Endothelial cell of umbilical vein (primary cell): ENCODE measurements at regions of chr14 and their contacts with region 1.

Region 1: GRCh38 chr14:75982266-75983018 is 647 bp upstream of the TGFB3 start:
- DNase-seq: peak; percentile 78
- H3K4me3 ChIP-seq: peak overlapping the region; percentile 66 to 73 (median 68)
- H3K27ac ChIP-seq: peak overlapping the region; percentile 62
- H3K4me1 ChIP-seq: peaks cover 28% of the 10 kb centered on the region
- H3K27me3 ChIP-seq: no peaks in the 10 kb centered on the region
- CTCF ChIP-seq: peak; percentile 32 to 74
- POLR2A ChIP-seq: no peak

Region 2: GRCh38 chr14:75660630-75661494 is 321.6 kb before region 1 on chr14 and contains the starts of genes ERG28 and TTLL5:
- CTCF ChIA-PET with region 1: interaction called, 7 read pairs
- POLR2A ChIA-PET with region 1: no interaction called
- dilution Hi-C with region 1: no loop called
- intact Hi-C with region 1: loop called (anchors 2 kb)
- DNase-seq: peak; percentile 98
- H3K4me3 ChIP-seq: peak within 1 kb of the TSS; percentile 84 to 99 (median 97)
- H3K27ac ChIP-seq: peak within 1 kb of the TSS; percentile 71
- H3K4me1 ChIP-seq: peaks cover 36% of the 10 kb centered on the region
- H3K27me3 ChIP-seq: no peaks in the 10 kb centered on the region
- CTCF ChIP-seq: no peak
- POLR2A ChIP-seq: no peak
- total RNA-seq, gene ERG28: 31.4 and 31.9 TPM in 2 replicates
- total RNA-seq, gene TTLL5: 70.0 and 93.6 TPM in 2 replicates

Region 3: GRCh38 chr14:75794615-75795038 is 187.8 kb before region 1 on chr14:
- CTCF ChIA-PET with region 1: interaction called, 195 read pairs
- POLR2A ChIA-PET with region 1: interaction called, 4 read pairs
- dilution Hi-C with region 1: no loop called
- intact Hi-C with region 1: loop called (anchors 1 kb)
- DNase-seq: peak; percentile 49
- H3K4me3 ChIP-seq: no peak overlapping the region
- H3K27ac ChIP-seq: no peak overlapping the region
- H3K4me1 ChIP-seq: no peaks in the 10 kb centered on the region
- H3K27me3 ChIP-seq: no peaks in the 10 kb centered on the region
- CTCF ChIP-seq: peak in 1 of 2 donors; percentile 31
- POLR2A ChIP-seq: no peak

Region 4: DNA sequence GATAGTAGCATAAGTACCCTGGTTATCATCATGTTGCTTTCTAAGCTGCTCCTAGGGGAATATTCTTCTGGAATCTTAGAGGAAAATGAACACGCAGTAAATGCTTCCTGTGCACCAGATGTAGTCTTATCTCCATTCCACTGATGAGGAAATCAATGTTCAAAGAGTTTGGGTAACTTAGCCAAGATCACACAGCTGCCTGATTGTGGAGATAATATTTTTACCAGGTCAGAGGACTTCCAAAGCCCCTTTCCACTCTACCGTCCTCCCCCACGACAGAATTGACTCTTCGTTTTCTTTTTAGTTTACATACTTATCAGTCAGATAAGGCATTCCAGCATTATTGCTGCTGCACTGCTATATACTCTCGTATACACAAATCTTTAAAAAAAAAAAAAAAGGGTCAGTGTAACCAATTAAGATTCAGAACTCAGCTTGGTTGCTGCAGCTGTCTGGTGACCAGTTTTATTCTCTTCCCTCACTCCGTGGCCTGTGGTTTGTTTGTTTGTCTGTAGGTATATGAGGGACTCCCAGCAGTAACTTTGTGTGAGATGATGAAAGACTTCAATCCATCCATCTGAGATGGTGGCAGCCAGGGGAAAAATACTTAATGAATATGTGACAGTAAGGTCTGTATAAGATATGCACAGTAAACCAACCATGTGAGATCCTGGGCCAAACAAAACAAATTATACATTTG is 111.1 kb before region 1 on chr14:
- CTCF ChIA-PET with region 1: interaction called, 20 read pairs
- POLR2A ChIA-PET with region 1: no interaction called
- dilution Hi-C with region 1: no loop called
- intact Hi-C with region 1: loop called (anchors 2 kb)
- DNase-seq: peak; percentile 91
- H3K4me3 ChIP-seq: peak overlapping the region in 1 of 3 experiments; percentile 18
- H3K27ac ChIP-seq: peak overlapping the region; percentile 98
- H3K4me1 ChIP-seq: peaks cover 59% of the 10 kb centered on the region
- H3K27me3 ChIP-seq: no peaks in the 10 kb centered on the region
- CTCF ChIP-seq: no peak
- POLR2A ChIP-seq: peak; percentile 48

Region 5: GRCh38 chr14:75995372-75996041 is 13.1 kb after region 1 on chr14:
- CTCF ChIA-PET with region 1: interaction called, 11 read pairs
- POLR2A ChIA-PET with region 1: no interaction called
- dilution Hi-C with region 1: no loop called
- intact Hi-C with region 1: no loop called
- DNase-seq: no peak
- H3K4me3 ChIP-seq: no peak overlapping the region
- H3K27ac ChIP-seq: no peak overlapping the region
- H3K4me1 ChIP-seq: no peaks in the 10 kb centered on the region
- H3K27me3 ChIP-seq: no peaks in the 10 kb centered on the region
- CTCF ChIP-seq: no peak
- POLR2A ChIP-seq: no peak

Region 6: DNA sequence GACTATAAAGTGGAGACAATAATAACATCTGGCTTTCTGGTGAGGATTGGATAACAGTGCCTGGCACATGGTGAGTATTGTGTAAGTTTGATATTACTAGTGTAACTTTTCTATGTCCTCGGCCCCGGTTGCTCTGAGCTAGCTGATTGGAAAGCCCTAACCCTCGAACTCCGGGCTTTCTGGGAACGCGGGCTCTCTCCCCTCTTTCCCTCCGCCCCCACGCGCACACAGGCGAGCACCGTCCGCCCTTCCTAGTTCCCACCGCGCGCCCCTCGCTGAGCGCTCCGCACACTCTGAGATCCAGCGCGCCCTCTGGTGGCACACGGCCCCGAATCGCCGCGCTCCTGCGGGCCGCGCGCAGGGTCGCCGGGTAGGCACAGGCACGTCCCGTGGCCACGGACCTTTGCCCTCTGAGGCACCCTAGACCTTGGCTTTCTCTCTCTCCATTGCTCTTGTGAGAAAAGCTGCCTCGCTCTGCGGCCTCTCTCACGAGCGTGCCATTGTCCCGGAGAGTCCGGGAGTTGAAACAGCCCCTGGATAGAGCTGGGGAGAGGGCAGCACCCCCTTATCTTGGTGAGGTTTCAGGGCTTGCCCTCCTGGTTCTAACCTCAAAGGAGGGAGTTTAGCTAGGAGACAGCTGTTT is 370.3 kb after region 1 on chr14:
- CTCF ChIA-PET with region 1: no interaction called
- POLR2A ChIA-PET with region 1: no interaction called
- dilution Hi-C with region 1: no loop called
- intact Hi-C with region 1: loop called (anchors 5 kb)
- DNase-seq: peak; percentile 37
- H3K4me3 ChIP-seq: no peak overlapping the region
- H3K27ac ChIP-seq: no peak overlapping the region
- H3K4me1 ChIP-seq: peaks cover 18% of the 10 kb centered on the region
- H3K27me3 ChIP-seq: peaks cover 0 to 7% of the 10 kb centered on the region in 2 experiments
- CTCF ChIP-seq: peak; percentile 88 to 93
- POLR2A ChIP-seq: no peak